ENCODE measurements at regions of chr19 and their contacts with region 1.

Region 1: GRCh38 chr19:14571695-14572490 is at the start of gene NDUFB7:
- DNase-seq: peak; percentile 88
- H3K4me3 Mint-ChIP-seq: peak within 1 kb of the TSS; percentile 93
- H3K27ac Mint-ChIP-seq: peak within 1 kb of the TSS; percentile 20
- H3K4me1 Mint-ChIP-seq: no peaks in the 10 kb centered on the region
- H3K27me3 Mint-ChIP-seq: no peaks in the 10 kb centered on the region
- CTCF ChIP-seq: peak; percentile 42
- total RNA-seq, gene NDUFB7: 107 and 111 TPM in 2 replicates

Region 2: GRCh38 chr19:14529254-14530004 is 42.5 kb before region 1 on chr19 and contains the start of gene TECR:
- CTCF ChIA-PET with region 1: no interaction called
- intact Hi-C with region 1: no loop called
- DNase-seq: peak; percentile 98
- H3K4me3 Mint-ChIP-seq: peak within 1 kb of the TSS; percentile 100
- H3K27ac Mint-ChIP-seq: peak within 1 kb of the TSS; percentile 91
- H3K4me1 Mint-ChIP-seq: no peaks in the 10 kb centered on the region
- H3K27me3 Mint-ChIP-seq: no peaks in the 10 kb centered on the region
- CTCF ChIP-seq: no peak
- total RNA-seq, gene TECR: 136 and 162 TPM in 2 replicates

Region 3: DNA sequence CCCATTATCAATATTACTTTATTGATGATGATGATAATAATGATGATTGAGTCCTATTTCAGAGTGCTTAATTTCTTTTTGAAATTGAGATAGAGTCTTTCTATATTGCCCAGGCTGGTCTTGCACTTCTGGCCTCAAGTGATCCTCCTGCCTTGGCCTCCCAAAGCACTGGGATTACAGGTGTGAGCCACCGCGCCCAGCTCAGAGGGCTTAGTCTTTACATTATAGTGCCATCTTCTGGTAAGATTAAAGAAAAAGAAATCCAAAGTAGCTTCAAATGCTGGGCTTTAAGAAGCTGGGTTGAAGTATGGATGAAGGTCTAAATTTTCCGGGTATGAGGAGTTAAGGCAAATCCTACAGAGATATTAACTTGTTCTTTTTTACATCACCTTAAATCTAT is 114.5 kb after region 1 on chr19:
- CTCF ChIA-PET with region 1: interaction called, 17 read pairs
- intact Hi-C with region 1: loop called (anchors 2 kb)
- DNase-seq: peak; percentile 13
- H3K4me3 Mint-ChIP-seq: no peak overlapping the region
- H3K27ac Mint-ChIP-seq: no peak overlapping the region
- H3K4me1 Mint-ChIP-seq: no peaks in the 10 kb centered on the region
- H3K27me3 Mint-ChIP-seq: peaks cover 21% of the 10 kb centered on the region
- CTCF ChIP-seq: no peak

Region 4: GRCh38 chr19:14786421-14786851 is 214.5 kb after region 1 on chr19:
- CTCF ChIA-PET with region 1: no interaction called
- intact Hi-C with region 1: no loop called
- DNase-seq: peak; percentile 4
- H3K4me3 Mint-ChIP-seq: no peak overlapping the region
- H3K27ac Mint-ChIP-seq: no peak overlapping the region
- H3K4me1 Mint-ChIP-seq: peaks cover 9% of the 10 kb centered on the region
- H3K27me3 Mint-ChIP-seq: peaks cover 14% of the 10 kb centered on the region
- CTCF ChIP-seq: peak; percentile 44

Region 5: DNA sequence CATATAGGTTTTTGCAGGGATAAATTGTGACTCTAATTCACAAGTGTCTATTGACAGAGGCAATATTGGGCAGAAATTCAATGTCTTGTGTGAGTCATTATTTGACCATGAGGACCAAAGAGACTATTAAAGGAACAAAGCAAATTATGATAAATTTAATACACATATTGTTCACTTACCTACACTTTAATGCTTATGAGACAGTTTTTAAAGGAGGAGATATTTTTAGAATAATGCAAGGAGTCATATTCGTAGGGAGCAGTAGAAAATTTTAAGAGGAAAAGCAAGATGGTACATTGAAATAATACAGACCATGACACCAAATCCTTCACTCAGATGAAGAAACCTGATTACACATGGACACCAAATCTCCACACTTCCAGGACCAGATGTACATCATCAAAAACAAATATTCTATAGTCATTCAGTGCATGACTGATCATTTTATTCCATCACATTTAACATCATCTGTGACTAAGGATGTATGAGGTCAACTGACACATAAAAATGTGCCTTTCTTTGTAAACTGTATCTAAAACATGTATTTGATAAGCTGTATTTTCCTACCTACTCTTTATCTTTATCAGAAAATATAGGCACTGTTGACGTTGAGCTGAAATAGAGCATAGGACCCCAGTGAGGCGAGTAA is 318.2 kb after region 1 on chr19:
- CTCF ChIA-PET with region 1: no interaction called
- intact Hi-C with region 1: loop called (anchors 5 kb)
- DNase-seq: no peak
- H3K4me3 Mint-ChIP-seq: no peak overlapping the region
- H3K27ac Mint-ChIP-seq: no peak overlapping the region
- H3K4me1 Mint-ChIP-seq: peaks cover 11% of the 10 kb centered on the region
- H3K27me3 Mint-ChIP-seq: peaks cover 54% of the 10 kb centered on the region
- CTCF ChIP-seq: no peak